ENCODE measurements at regions of chr5 and their contacts with region 1.

Region 1: DNA sequence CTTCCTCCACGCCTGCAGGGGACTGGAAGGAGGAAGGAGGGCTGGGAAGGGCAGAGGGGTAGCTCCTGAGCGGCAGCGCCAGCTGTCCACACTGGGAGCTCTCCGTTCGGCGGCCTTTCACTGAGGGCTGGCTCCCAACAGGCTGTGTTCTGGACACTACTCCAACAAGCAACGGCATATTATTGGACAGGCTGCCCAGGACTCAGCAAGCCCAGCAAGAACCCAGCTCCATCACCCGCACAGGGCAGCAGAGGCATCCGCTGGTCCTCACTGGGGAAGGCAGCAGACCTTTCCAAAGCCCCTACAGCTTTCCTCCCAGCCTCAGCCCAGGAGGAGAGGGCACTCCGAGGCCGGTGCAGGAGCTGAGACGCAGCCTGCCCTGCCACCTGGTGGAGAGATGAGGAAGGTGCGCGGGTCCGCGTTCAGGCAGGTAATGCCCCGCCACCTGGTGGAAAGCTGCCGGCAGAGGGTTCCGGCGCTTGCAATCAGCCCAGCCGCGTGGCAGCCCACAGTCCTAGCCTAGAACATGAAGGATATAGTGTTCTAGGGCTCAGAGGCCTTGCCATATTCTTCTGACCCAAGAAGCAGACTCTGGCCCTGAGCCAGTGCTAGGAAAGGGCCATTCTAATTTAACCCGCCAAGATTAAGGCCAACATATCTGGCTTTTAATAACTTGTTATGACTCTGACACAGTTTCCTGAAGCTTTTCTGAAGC is 74.4 kb downstream of the NRG2 start:
- DNase-seq: peak; percentile 75
- H3K4me3 ChIP-seq: no peak overlapping the region
- H3K27ac ChIP-seq: no peak overlapping the region
- H3K4me1 ChIP-seq: no peaks in the 10 kb centered on the region
- H3K27me3 ChIP-seq: peaks cover 20 to 22% of the 10 kb centered on the region in 2 experiments
- CTCF ChIP-seq: peak; percentile 99 to 100
- POLR2A ChIP-seq: no peak

Region 2: DNA sequence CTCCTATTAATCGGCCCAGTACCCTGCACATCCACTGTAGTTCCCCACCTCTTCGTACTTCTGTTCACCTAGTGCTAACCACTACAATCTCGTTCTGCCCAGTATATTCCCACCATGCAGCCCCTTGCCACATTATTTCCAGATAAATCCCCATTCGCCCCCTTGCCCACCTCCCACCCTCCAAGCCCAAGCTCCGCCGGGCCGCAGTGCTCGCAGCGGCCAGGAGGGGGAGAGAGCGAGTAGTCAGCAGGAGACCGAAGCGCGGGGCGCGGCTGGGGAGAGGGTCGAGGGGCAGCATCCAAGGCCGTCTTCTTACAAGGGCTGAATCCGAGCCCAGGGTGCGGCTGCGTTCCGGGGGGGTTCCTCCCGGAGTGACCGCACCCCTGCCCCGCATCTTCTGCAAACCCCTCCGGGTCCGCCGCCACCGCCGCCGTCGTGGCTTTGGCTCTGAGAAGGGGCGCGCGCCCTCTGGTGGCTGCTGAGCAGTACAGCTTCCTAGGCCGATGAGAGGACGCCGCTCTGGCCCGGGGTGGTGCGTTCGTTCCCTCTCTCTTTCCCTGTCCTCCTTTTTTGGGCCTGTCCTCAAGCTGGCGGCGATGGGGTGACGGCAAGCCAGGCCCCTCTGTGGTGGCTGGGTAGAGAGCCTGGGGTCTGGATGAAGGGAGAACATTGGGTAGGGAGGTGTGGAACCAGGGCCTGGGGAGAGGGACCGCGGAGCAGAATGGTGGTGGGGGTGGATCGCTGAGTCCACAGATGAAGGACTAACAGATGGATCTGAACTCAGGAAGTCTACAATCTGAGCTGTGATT is 203.1 kb before region 1 on chr5:
- CTCF ChIA-PET with region 1: interaction called, 10 read pairs
- POLR2A ChIA-PET with region 1: no interaction called
- dilution Hi-C with region 1: no loop called
- intact Hi-C with region 1: no loop called
- DNase-seq: peak; percentile 76
- H3K4me3 ChIP-seq: peak overlapping the region; percentile 37 to 49 (median 40)
- H3K27ac ChIP-seq: no peak overlapping the region
- H3K4me1 ChIP-seq: peaks cover 21% of the 10 kb centered on the region
- H3K27me3 ChIP-seq: peaks cover 12 to 14% of the 10 kb centered on the region in 2 experiments
- CTCF ChIP-seq: peak in 1 of 2 donors; percentile 83
- POLR2A ChIP-seq: no peak

Region 3: DNA sequence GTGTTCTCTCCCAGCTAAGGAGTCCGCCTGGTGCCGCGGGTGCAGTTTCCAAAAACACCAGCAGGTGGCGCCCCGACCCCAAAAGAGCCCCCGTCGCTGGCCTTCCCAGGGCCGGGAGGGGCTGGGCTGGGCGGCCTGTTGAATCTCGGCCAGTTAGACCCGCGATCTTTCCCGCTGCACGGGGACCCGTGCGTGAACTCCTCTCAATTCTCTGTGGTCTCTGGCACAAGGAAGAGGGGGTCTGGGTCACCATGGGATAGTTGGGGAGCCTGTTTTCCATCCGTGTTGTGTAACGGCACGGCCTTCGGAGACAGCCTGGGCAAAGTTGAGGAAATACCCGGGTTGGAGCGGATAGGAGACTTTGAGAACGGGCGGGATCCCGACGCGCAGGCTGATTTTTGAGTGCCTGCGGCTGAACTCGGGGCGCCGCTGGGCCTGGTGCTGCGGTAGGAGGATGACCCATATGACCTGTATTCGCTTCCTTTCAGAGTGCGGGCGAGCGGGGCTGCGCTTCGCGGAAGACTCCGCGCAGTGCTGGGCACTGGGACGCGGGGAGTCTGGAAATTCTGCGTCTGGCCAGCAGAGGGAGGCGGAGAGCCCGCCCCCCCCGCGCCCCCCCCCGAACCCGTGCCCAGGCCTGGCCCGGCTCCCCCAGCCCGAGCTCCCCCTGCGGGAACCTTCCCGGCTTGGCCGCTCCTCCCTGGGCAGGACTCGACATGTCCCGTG is 181.0 kb before region 1 on chr5:
- CTCF ChIA-PET with region 1: interaction called, 235 read pairs
- POLR2A ChIA-PET with region 1: no interaction called
- dilution Hi-C with region 1: no loop called
- intact Hi-C with region 1: loop called (anchors 1 kb)
- DNase-seq: peak; percentile 82
- H3K4me3 ChIP-seq: peak overlapping the region; percentile 61 to 87 (median 83)
- H3K27ac ChIP-seq: no peak overlapping the region
- H3K4me1 ChIP-seq: peaks cover 3% of the 10 kb centered on the region
- H3K27me3 ChIP-seq: peaks cover 2% of the 10 kb centered on the region in 2 experiments
- CTCF ChIP-seq: peak; percentile 93 to 98
- POLR2A ChIP-seq: no peak

Region 4: DNA sequence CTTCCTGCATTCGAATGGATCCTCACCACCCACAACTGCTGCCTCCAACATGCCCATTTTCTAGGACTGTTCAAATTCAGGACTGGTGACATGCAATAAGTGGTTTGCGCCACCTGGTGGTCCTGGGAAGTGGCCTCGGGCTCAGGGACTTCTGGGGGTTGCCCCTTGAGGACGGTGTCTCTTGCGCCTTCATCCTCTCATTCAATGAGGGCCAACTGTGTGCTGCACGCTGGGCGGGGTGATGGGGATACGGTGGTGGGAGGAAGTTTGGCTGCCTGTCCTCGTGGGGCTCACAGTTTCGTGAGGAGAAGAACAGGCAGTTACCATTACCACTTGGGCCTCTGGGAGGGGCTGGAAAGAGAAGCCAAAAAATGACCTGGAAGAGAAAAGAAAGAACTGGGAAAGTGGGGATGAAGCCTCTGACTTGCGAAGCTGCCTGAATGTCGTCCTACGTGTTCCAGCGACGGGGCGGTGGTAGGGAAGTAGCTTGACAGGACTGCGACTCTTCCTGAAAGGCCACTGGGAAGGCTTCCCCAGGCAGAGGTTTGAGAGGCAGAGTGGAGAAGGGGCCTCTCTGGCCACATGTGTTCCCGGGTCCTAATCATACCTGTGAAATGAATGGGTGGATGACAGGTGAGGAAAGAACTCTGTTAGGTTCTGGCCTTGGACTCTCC is 124.1 kb before region 1 on chr5:
- CTCF ChIA-PET with region 1: interaction called, 13 read pairs
- POLR2A ChIA-PET with region 1: no interaction called
- dilution Hi-C with region 1: no loop called
- intact Hi-C with region 1: loop called (anchors 1 kb)
- DNase-seq: peak; percentile 62
- H3K4me3 ChIP-seq: no peak overlapping the region
- H3K27ac ChIP-seq: no peak overlapping the region
- H3K4me1 ChIP-seq: no peaks in the 10 kb centered on the region
- H3K27me3 ChIP-seq: peaks cover 4 to 7% of the 10 kb centered on the region in 2 experiments
- CTCF ChIP-seq: peak; percentile 83 to 94
- POLR2A ChIP-seq: no peak

Region 5: DNA sequence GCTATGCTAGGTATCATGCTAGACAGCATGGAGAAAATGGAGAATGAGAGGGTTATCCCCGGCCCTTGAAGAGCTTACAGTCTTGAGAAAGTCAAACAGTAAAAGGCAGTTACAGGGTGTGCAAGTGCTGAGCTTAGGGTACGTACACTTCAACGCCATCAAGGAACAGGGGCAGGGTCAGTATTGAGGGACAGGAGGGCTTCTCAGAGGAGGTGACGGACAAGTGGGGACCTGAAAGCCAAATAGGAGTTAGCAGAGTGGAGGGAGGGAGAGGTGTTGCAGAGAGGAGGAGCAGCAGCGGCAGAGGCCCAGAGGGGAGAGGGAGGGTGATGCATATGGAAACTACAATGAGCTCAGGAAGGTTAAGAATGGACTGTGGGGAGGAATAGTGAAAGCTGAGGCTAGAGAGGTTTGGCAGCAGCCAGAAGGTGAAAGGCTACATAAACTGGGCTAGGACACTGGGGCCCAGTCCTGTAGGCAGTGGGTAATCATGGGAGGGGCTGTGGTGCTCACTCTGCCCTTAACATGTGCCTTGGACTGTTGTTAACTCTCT is 13.6 kb before region 1 on chr5:
- CTCF ChIA-PET with region 1: interaction called, 25 read pairs
- POLR2A ChIA-PET with region 1: no interaction called
- dilution Hi-C with region 1: no loop called
- intact Hi-C with region 1: no loop called
- DNase-seq: no peak
- H3K4me3 ChIP-seq: no peak overlapping the region
- H3K27ac ChIP-seq: no peak overlapping the region
- H3K4me1 ChIP-seq: no peaks in the 10 kb centered on the region
- H3K27me3 ChIP-seq: peaks cover 4 to 11% of the 10 kb centered on the region in 2 experiments
- CTCF ChIP-seq: no peak
- POLR2A ChIP-seq: no peak

Region 6: GRCh38 chr5:140042643-140043500 is 74.2 kb after region 1 on chr5 and contains the start of gene NRG2:
- CTCF ChIA-PET with region 1: interaction called, 22 read pairs
- POLR2A ChIA-PET with region 1: no interaction called
- dilution Hi-C with region 1: no loop called
- intact Hi-C with region 1: no loop called
- DNase-seq: peak; percentile 65
- H3K4me3 ChIP-seq: peak within 1 kb of the TSS; percentile 23 to 54 (median 44)
- H3K27ac ChIP-seq: no peak within 1 kb of the TSS
- H3K4me1 ChIP-seq: peaks cover 27% of the 10 kb centered on the region
- H3K27me3 ChIP-seq: peaks cover 3 to 12% of the 10 kb centered on the region in 2 experiments
- CTCF ChIP-seq: peak; percentile 32 to 72
- POLR2A ChIP-seq: no peak
- total RNA-seq, gene NRG2: 0.30 and 0.42 TPM in 2 replicates

Region 7: GRCh38 chr5:140157032-140157803 is 188.5 kb after region 1 on chr5:
- CTCF ChIA-PET with region 1: interaction called, 6 read pairs
- POLR2A ChIA-PET with region 1: no interaction called
- dilution Hi-C with region 1: no loop called
- intact Hi-C with region 1: loop called (anchors 1 kb)
- DNase-seq: peak; percentile 75
- H3K4me3 ChIP-seq: peak overlapping the region in 2 of 3 experiments; percentile 19 to 24
- H3K27ac ChIP-seq: no peak overlapping the region
- H3K4me1 ChIP-seq: peaks cover 4% of the 10 kb centered on the region
- H3K27me3 ChIP-seq: no peaks in the 10 kb centered on the region
- CTCF ChIP-seq: peak; percentile 81 to 86
- POLR2A ChIP-seq: no peak

Measured in endothelial cell of umbilical vein (primary cell).